ENCODE measurements at regions of chr7 and their contacts with region 1.

Region 1: DNA sequence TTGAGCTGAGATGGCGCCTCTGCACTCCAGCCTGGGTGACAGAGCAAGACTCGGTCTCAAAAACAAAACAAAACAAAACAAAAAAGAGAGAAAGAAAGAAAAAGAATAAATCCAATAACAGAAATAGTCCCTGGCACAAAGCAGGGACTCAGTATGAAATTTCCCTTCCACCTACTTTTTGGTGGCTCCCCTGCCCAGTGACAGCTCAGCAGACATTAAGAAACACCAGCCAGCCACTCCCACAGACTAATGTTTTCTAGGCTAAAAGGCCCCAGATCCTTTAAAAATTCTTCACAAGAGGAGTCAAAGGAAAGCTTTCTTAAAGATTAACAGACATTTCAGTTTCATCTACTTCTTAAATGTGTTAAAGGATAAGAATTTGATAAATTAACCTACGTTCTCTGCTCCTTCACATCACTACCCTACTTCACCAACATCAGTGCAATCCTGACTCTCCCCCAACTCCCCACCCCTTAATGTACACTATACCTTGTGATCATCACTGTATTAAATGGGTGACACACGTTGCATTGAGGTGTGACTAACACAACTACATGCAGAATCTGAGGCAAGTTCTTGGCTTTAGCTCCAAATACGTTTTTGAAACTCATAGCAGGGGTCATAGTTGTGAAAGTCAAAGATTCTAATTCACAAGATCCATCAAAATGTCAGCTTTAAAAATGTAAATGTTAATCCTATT is 114.5 kb upstream of the CAV2 start:
- DNase-seq: peak; percentile 81
- ATAC-seq: peak; percentile 98
- H3K4me3 ChIP-seq: peak overlapping the region; percentile 1; the same call in 1 of the 2 replicates
- H3K27ac ChIP-seq: peak overlapping the region; percentile 70
- H3K4me1 ChIP-seq: peaks cover 18% of the 10 kb centered on the region
- H3K27me3 ChIP-seq: no peaks in the 10 kb centered on the region
- CTCF ChIP-seq: no peak

Region 2: DNA sequence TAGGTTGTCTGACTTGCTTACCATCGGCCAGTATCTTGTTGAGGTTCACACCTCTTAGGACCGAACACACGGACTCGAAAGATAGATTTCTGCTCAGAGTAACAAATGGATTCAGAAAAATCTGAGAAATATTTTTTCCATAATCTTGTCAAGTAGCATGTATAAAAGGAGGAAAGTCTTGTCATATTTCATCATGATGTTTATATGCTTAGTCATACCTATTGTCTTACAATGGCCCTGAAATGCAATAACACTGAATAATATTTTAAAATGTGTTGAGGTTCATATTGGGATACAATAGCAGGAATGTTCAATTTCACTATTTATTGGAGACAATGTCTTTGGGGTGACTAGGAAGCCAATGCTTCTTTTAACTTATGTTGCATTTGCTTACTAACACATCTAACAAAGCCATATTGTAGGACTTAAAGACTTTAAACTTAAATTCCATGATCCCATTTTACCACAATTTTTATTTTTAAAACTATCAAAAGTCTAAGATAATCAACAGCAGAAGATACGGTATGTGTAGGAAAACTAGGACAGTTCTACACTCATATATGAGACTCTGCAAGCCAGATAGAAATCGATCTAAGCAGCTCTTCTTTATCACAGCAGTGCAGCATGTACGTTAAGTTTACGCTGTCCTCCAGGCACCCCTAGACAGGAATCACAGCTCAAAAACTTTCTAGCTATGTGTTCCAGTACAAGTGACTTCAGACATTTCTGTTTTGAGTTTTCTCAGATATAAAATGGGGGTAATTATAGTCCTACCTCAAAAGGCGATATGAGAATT is 21.3 kb before region 1 on chr7:
- CTCF ChIA-PET with region 1: no interaction called
- POLR2A ChIA-PET with region 1: no interaction called
- intact Hi-C with region 1: loop called (anchors 2 kb)
- DNase-seq: peak; percentile 51
- ATAC-seq: peak; percentile 76
- H3K4me3 ChIP-seq: no peak overlapping the region
- H3K27ac ChIP-seq: peak overlapping the region; percentile 41
- H3K4me1 ChIP-seq: peaks cover 28% of the 10 kb centered on the region
- H3K27me3 ChIP-seq: no peaks in the 10 kb centered on the region
- CTCF ChIP-seq: no peak

Region 3: DNA sequence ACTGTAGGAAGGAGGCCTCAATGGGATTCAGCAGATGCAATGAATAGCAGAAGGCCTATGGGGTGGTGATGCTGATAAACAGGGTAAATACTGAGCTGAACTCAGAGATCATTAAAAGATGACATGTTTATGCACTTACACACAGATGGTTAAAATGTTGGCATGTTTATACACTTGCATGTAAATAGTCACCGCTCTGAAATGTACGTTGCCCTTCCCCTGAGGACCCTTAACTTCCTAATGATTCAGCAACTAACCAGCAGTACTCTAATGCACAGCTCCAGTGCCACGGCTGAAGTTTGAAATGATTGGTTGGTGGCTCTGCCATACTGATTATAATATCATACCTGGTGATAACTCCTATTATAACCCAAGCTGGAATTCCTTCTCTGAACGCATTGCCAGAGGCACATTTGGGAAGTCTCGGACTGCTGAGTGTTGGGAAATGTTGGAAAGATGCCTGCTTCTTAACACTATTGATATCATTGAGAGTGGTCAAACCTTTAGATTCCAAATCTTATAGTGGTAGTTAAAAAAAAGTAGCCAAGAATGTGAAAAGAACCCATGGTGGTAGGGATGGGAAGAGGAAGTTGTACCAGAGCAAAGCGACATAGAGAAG is 136.1 kb after region 1 on chr7:
- CTCF ChIA-PET with region 1: no interaction called
- POLR2A ChIA-PET with region 1: interaction called, 23 read pairs
- intact Hi-C with region 1: no loop called
- DNase-seq: peak; percentile 83
- ATAC-seq: peak; percentile 2; the same call in 1 of the 2 replicates
- H3K4me3 ChIP-seq: no peak overlapping the region
- H3K27ac ChIP-seq: peak overlapping the region; percentile 73
- H3K4me1 ChIP-seq: peaks cover 37% of the 10 kb centered on the region
- H3K27me3 ChIP-seq: no peaks in the 10 kb centered on the region
- CTCF ChIP-seq: no peak